ENCODE measurements at regions of chr2 and their contacts with region 1.

Region 1: DNA sequence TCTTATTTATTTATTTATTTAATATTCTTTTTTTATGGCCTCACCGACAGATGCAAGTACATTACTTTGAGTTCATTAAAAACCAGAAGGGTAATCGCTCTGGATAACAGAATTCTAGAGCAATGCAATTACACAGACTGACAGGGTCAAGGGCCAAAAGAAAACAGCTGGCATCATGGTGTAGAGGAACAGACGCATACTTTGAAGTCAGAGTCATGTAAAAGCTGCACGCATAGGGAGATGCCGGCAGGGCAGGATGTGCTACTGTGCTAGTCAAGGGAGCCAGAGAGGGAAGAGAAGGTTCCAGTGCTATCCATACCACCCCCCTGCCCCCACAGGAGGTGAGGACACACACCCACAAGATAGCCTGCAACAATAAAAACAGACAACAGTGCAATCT is 115.2 kb upstream of the TFCP2L1 start:
- DNase-seq: no peak
- H3K4me3 ChIP-seq: no peak overlapping the region
- H3K27ac ChIP-seq: no peak overlapping the region
- H3K4me1 ChIP-seq: no peaks in the 10 kb centered on the region
- H3K27me3 ChIP-seq: no peaks in the 10 kb centered on the region
- CTCF ChIP-seq: no peak
- POLR2A ChIP-seq: no peak

Region 2: GRCh38 chr2:121338281-121338680 is 61.9 kb before region 1 on chr2:
- CTCF ChIA-PET with region 1: no interaction called
- POLR2A ChIA-PET with region 1: no interaction called
- dilution Hi-C with region 1: no loop called
- intact Hi-C with region 1: no loop called
- DNase-seq: no peak
- H3K4me3 ChIP-seq: no peak overlapping the region
- H3K27ac ChIP-seq: no peak overlapping the region
- H3K4me1 ChIP-seq: peaks cover 5% of the 10 kb centered on the region
- H3K27me3 ChIP-seq: no peaks in the 10 kb centered on the region
- CTCF ChIP-seq: no peak
- POLR2A ChIP-seq: no peak

Region 3: DNA sequence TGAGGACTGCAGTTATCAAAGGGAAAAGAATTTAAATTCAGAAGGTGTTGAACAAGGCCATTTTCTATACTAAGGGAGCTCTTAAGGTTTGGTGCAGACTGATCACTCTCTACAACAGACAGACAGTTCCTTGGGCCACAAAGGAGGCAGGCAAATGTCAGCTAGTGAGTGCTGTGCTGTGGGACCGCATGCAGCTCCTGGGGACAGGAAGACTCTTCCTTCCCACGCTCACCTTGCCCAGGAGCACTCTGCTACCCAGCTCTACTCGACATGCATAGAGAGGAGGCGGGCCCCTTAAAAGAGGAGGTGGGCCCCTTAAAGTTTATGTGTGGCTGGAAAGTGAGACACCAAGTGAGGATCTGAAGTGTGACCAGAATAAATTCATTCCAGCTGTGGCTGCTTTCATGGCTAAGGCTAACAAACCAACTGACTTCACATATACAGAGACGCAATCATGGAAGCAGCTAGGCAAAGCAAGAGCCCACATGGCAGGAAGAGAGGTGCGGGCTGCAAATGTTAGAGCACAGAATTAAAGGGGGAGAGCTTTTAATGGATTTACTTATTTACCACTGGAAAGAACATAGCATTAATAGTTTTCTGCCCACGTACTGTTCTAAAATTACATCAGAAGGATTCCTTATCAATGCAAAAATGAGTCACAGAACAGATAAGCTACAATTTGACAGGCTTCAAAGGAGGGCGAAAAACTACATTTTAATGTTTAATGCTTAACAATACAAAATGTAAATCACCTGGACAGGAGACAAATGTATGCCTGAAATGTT is 29.1 kb after region 1 on chr2:
- CTCF ChIA-PET with region 1: interaction called, 13 read pairs
- POLR2A ChIA-PET with region 1: no interaction called
- dilution Hi-C with region 1: no loop called
- intact Hi-C with region 1: no loop called
- DNase-seq: no peak
- H3K4me3 ChIP-seq: no peak overlapping the region
- H3K27ac ChIP-seq: no peak overlapping the region
- H3K4me1 ChIP-seq: no peaks in the 10 kb centered on the region
- H3K27me3 ChIP-seq: no peaks in the 10 kb centered on the region
- CTCF ChIP-seq: no peak
- POLR2A ChIP-seq: no peak

Region 4: GRCh38 chr2:121722479-121722878 is 322.3 kb after region 1 on chr2:
- CTCF ChIA-PET with region 1: interaction called, 42 read pairs
- POLR2A ChIA-PET with region 1: interaction called, 4 read pairs
- dilution Hi-C with region 1: no loop called
- intact Hi-C with region 1: loop called (anchors 1 kb)
- DNase-seq: no peak
- H3K4me3 ChIP-seq: no peak overlapping the region
- H3K27ac ChIP-seq: no peak overlapping the region
- H3K4me1 ChIP-seq: no peaks in the 10 kb centered on the region
- H3K27me3 ChIP-seq: no peaks in the 10 kb centered on the region
- CTCF ChIP-seq: no peak
- POLR2A ChIP-seq: no peak

Region 5: GRCh38 chr2:121748202-121748601 is 348.0 kb after region 1 on chr2:
- CTCF ChIA-PET with region 1: interaction called, 17 read pairs
- POLR2A ChIA-PET with region 1: interaction called, 3 read pairs
- dilution Hi-C with region 1: no loop called
- intact Hi-C with region 1: no loop called
- DNase-seq: peak; percentile 28
- H3K4me3 ChIP-seq: no peak overlapping the region
- H3K27ac ChIP-seq: no peak overlapping the region
- H3K4me1 ChIP-seq: no peaks in the 10 kb centered on the region
- H3K27me3 ChIP-seq: peaks cover 0 to 3% of the 10 kb centered on the region in 2 experiments
- CTCF ChIP-seq: peak; percentile 27 to 35
- POLR2A ChIP-seq: no peak

Measured in endothelial cell of umbilical vein (primary cell).